ENCODE measurements at regions of chr11 and their contacts with region 1.

Region 1: GRCh38 chr11:35662649-35663407 is at the start of gene TRIM44:
- DNase-seq: peak; percentile 91
- H3K4me3 ChIP-seq: peak within 1 kb of the TSS; percentile 50 to 81 (median 72)
- H3K27ac ChIP-seq: peak within 1 kb of the TSS; percentile 84 to 98 (median 91)
- H3K4me1 ChIP-seq: peaks cover 0 to 27% (median 20%) of the 10 kb centered on the region in 4 donors
- H3K27me3 ChIP-seq: no peaks in the 10 kb centered on the region
- CTCF ChIP-seq: no peak
- EP300 ChIP-seq: no peak
- POLR2A ChIP-seq: no peak
- total RNA-seq, gene TRIM44: 23.0 to 97.2 (median 37.8) TPM

Region 2: DNA sequence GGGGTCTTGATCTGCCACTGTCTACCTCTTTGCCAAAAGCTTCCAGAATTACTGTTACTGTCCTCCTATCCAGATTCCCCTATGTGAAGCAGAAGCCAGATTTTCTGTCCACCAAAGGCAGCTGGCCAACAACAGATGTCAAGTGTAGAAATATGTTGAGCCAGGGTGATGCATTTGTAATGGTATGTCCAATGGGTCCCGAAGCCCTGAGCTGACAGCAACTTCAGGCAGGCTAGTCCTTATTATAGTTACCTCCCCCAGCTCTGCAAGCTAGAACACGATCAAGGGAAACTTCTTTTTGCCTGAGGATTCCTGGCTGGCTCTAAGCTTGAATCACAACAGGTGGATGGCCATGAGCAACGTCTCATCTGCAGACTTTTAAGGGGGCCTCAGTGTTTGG is 147.6 kb before region 1 on chr11:
- intact Hi-C with region 1: no loop called
- DNase-seq: no peak
- H3K4me3 ChIP-seq: no peak overlapping the region
- H3K27ac ChIP-seq: no peak overlapping the region
- H3K4me1 ChIP-seq: peaks cover 0 to 20% (median 4%) of the 10 kb centered on the region in 4 donors
- H3K27me3 ChIP-seq: no peaks in the 10 kb centered on the region
- CTCF ChIP-seq: no peak
- EP300 ChIP-seq: no peak
- POLR2A ChIP-seq: no peak

Region 3: DNA sequence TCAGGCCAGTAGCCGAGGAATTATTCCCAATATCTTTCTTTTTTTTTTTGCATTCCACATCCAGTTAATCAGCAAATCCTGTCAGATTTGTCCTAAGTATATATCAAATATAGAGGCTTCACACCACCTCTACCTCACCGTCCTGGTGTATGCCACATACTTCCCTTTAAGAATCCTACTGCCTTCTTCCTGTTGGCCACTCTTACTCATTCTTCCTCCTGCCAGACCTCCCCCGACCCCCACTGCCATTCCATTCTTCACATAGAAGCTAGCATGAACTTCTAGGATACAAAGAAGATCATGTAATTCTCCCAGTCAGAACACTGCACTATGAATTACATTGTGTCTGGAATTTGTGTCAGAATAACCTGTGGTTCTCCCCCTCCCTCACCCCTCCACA is 89.3 kb after region 1 on chr11:
- intact Hi-C with region 1: no loop called
- DNase-seq: no peak
- H3K4me3 ChIP-seq: no peak overlapping the region
- H3K27ac ChIP-seq: no peak overlapping the region
- H3K4me1 ChIP-seq: peaks cover 0 to 6% (median 0%) of the 10 kb centered on the region in 4 donors
- H3K27me3 ChIP-seq: no peaks in the 10 kb centered on the region
- CTCF ChIP-seq: no peak
- EP300 ChIP-seq: no peak
- POLR2A ChIP-seq: no peak

Region 4: GRCh38 chr11:35943713-35944655 is 281.2 kb after region 1 on chr11 and contains the start of gene LDLRAD3:
- intact Hi-C with region 1: loop called (anchors 10 kb)
- DNase-seq: peak; percentile 91
- H3K4me3 ChIP-seq: peak within 1 kb of the TSS; percentile 44 to 69 (median 62)
- H3K27ac ChIP-seq: peak within 1 kb of the TSS; percentile 65 to 81 (median 76)
- H3K4me1 ChIP-seq: peaks cover 0 to 20% (median 12%) of the 10 kb centered on the region in 4 donors
- H3K27me3 ChIP-seq: no peaks in the 10 kb centered on the region
- CTCF ChIP-seq: no peak
- EP300 ChIP-seq: no peak
- POLR2A ChIP-seq: peak in 1 of 2 donors; percentile 11
- total RNA-seq, gene LDLRAD3: 10.2 to 23.4 (median 11.9) TPM

Region 5: GRCh38 chr11:36289226-36289852 is 626.5 kb after region 1 on chr11 and contains the start of gene COMMD9:
- intact Hi-C with region 1: loop called (anchors 5 kb)
- DNase-seq: peak; percentile 97
- H3K4me3 ChIP-seq: peak within 1 kb of the TSS; percentile 44 to 64 (median 55)
- H3K27ac ChIP-seq: peak within 1 kb of the TSS; percentile 10 to 59 (median 42)
- H3K4me1 ChIP-seq: peaks cover 0 to 17% (median 12%) of the 10 kb centered on the region in 4 donors
- H3K27me3 ChIP-seq: no peaks in the 10 kb centered on the region
- CTCF ChIP-seq: no peak
- EP300 ChIP-seq: no peak
- POLR2A ChIP-seq: no peak
- total RNA-seq, gene COMMD9: 15.5 to 44.6 (median 26.2) TPM

Measured in sigmoid colon (tissue), 7 donors.